ENCODE measurements at regions of chr19 and their contacts with region 1.

Region 1: DNA sequence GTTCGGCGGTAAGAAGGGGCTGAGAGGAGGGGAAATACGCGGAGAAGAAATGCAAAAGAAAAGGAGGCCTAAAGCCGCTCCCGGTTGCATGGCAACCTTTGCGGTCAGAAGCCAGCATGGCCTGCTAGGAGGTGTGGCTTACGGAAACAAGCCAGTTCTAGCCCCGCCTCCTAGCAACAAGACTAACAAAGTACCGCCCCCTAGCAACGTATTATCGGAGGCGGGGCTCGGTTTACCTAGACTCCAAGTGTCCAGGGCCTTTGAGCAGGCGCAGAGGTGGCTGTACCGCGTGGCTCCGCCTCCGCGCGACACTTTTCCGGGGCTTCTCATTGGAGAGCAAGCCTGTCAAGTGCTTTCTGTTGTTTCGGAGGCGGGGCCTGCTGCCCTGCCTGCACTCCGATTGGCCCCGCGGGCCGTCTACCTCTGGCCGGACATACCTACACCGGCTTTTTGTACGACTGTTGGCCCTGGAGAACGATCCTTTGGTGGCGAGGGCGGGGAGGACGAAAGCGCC is 337 bp upstream of the CYTH2 start:
- DNase-seq: peak; percentile 99
- ATAC-seq: peak; percentile 90
- H3K4me3 ChIP-seq: peak overlapping the region; percentile 81
- H3K27ac ChIP-seq: peak overlapping the region; percentile 70; the same call in 1 of the 2 replicates
- H3K4me1 ChIP-seq: peaks cover 4% of the 10 kb centered on the region; the same call in 1 of the 2 replicates
- H3K27me3 ChIP-seq: no peaks in the 10 kb centered on the region
- CTCF ChIP-seq: no peak

Region 2: GRCh38 chr19:48340995-48341394 is 127.8 kb before region 1 on chr19:
- CTCF ChIA-PET with region 1: interaction called, 18 read pairs
- POLR2A ChIA-PET with region 1: no interaction called
- intact Hi-C with region 1: no loop called
- DNase-seq: peak; percentile 86
- ATAC-seq: peak; percentile 97
- H3K4me3 ChIP-seq: no peak overlapping the region
- H3K27ac ChIP-seq: no peak overlapping the region
- H3K4me1 ChIP-seq: peaks cover 12% of the 10 kb centered on the region
- H3K27me3 ChIP-seq: no peaks in the 10 kb centered on the region
- CTCF ChIP-seq: no peak

Region 3: DNA sequence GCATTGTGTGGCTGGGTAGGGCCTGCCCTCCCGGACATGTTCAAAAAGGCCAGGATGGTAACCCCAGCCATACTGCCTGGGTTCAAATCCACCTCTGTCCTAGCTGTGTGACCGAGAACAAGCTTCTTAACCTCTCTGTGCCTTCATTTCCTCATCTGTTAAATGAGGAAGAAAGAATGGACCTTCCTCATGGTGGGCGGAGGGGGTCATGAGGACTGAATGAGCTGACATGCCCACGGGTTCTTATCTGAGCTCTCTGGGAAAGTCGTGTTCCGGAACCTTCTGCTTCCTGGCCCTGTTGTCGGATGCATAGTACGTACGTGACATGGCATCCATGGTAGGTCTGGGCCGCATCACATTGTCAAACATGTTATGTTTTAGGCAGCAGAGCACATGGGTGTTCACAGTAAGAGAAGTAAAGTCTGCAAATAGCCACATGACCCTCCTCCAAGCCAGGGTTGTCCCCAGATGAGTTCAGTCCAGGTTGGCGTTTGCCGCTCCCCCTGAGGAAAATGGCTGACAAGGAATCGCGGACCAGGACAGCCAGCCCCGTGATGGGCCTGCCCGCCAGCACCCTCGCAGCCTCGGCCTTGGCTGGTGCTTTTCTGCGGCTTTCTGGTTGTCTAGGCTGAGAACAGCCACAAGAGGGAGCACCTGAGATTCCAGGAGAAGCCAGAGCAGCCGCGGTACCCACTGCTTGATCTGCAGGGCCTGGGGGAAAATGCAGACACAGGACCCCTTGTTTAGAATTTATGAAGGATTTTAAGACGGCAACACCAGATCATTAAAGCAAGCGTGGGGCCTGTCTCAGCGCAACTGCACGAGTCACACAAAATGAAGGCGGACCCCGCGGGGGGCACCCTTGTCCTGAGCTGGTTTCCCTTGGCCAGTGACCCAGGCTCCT is 206.3 kb after region 1 on chr19:
- CTCF ChIA-PET with region 1: no interaction called
- POLR2A ChIA-PET with region 1: no interaction called
- intact Hi-C with region 1: no loop called
- DNase-seq: peak; percentile 85
- ATAC-seq: peak; percentile 88
- H3K4me3 ChIP-seq: no peak overlapping the region
- H3K27ac ChIP-seq: no peak overlapping the region
- H3K4me1 ChIP-seq: no peaks in the 10 kb centered on the region
- H3K27me3 ChIP-seq: no peaks in the 10 kb centered on the region
- CTCF ChIP-seq: peak; percentile 80

Measured in PC-3 (cell line).